ENCODE measurements at regions of chrX and their contacts with region 1.

Region 1: DNA sequence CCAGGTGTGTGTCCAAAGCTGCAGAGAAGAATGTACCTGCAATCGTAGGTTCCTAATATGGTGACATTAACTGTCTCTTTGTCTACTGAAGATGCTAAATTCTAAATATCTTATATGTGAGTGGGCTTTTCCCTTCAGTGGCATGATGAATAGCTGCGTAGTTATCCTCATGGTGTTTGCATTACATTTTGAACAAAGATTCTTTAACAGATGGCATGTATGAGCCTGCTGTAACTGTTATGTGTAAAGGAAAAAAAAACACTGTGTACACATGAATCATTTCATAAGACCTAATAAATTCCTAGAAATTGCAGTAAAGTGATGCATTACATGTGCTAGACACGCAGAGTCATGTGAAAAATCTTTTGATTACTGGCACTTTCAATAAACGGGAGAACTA is 288.0 kb downstream of the SH2D1A start:
- DNase-seq: no peak
- ATAC-seq: no peak
- H3K4me3 ChIP-seq: no peak overlapping the region
- H3K27ac ChIP-seq: no peak overlapping the region
- H3K4me1 ChIP-seq: no peaks in the 10 kb centered on the region
- H3K27me3 ChIP-seq: no peaks in the 10 kb centered on the region

Region 2: GRCh38 chrX:124605511-124605910 is 28.9 kb before region 1 on chrX:
- intact Hi-C with region 1: loop called in 1 of 2 experiments (anchors 2 kb)
- DNase-seq: no peak
- ATAC-seq: no peak
- H3K4me3 ChIP-seq: no peak overlapping the region
- H3K27ac ChIP-seq: no peak overlapping the region
- H3K4me1 ChIP-seq: no peaks in the 10 kb centered on the region
- H3K27me3 ChIP-seq: no peaks in the 10 kb centered on the region

Region 3: DNA sequence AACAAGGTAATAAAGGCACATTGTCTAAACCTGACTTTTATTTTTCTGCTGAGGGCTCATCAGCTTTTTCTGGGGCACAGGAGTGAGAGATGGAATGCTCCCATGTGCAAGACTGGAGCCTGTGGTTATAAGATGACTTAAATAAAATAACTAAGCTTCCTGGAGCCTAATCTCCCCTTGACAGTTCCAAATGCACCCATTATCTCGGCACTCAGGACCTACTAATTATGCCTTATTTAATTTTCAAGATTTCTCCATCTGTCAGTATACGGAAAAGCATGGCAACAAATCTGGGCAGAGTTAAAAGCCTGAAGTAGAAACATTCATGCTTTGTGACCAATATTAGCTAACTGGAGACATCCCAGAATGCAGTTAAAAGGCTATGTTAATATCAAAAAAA is 268.6 kb after region 1 on chrX:
- intact Hi-C with region 1: no loop called
- DNase-seq: no peak
- ATAC-seq: no peak
- H3K4me3 ChIP-seq: no peak overlapping the region
- H3K27ac ChIP-seq: no peak overlapping the region
- H3K4me1 ChIP-seq: no peaks in the 10 kb centered on the region
- H3K27me3 ChIP-seq: no peaks in the 10 kb centered on the region